HepG2 (cell line): ENCODE measurements at regions of chr2 and their contacts with region 1.

Region 1: GRCh38 chr2:193963472-193964119 is 1693.4 kb upstream of the SLC39A10 start:
- DNase-seq: peak; percentile 36
- ATAC-seq: peak; percentile 89
- H3K4me3 ChIP-seq: no peak overlapping the region
- H3K27ac ChIP-seq: no peak overlapping the region
- H3K4me1 ChIP-seq: no peaks in the 10 kb centered on the region
- H3K27me3 ChIP-seq: no peaks in the 10 kb centered on the region
- CTCF ChIP-seq: peak; percentile 55
- EP300 ChIP-seq: no peak
- POLR2A ChIP-seq: no peak
- RAD21 ChIP-seq: no peak

Region 2: DNA sequence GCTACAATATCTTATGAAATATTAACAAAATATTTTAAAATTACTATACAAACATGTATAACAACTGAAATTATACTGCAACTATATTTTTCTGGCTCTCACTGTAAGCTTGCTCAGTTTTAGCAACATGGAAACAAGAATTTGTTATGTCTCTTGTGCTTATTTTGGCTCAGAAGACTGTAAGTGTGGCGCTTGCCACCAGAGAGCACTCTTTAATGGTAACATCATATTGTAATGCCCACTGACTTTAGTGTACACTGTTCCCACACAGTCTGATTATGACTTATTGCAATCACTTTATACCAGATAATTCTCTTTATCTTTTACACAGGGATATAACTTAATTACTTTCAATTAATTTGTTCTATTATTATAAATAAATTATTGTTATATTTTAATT is 268.2 kb before region 1 on chr2:
- CTCF ChIA-PET with region 1: interaction called, 10 read pairs
- POLR2A ChIA-PET with region 1: no interaction called
- in situ Hi-C with region 1: loop called (anchors 5 kb)
- intact Hi-C with region 1: loop called (anchors 1 kb)
- DNase-seq: peak; percentile 30
- ATAC-seq: peak; percentile 92
- H3K4me3 ChIP-seq: no peak overlapping the region
- H3K27ac ChIP-seq: no peak overlapping the region
- H3K4me1 ChIP-seq: no peaks in the 10 kb centered on the region
- H3K27me3 ChIP-seq: no peaks in the 10 kb centered on the region
- CTCF ChIP-seq: peak; percentile 47
- EP300 ChIP-seq: no peak
- POLR2A ChIP-seq: no peak
- RAD21 ChIP-seq: no peak

Region 3: GRCh38 chr2:193776989-193777388 is 186.6 kb before region 1 on chr2:
- CTCF ChIA-PET with region 1: no interaction called
- POLR2A ChIA-PET with region 1: no interaction called
- in situ Hi-C with region 1: loop called (anchors 10 kb)
- intact Hi-C with region 1: no loop called
- DNase-seq: no peak
- ATAC-seq: no peak
- H3K4me3 ChIP-seq: no peak overlapping the region
- H3K27ac ChIP-seq: no peak overlapping the region
- H3K4me1 ChIP-seq: no peaks in the 10 kb centered on the region
- H3K27me3 ChIP-seq: no peaks in the 10 kb centered on the region
- CTCF ChIP-seq: peak; percentile 34
- EP300 ChIP-seq: no peak
- POLR2A ChIP-seq: no peak
- RAD21 ChIP-seq: no peak

Region 4: DNA sequence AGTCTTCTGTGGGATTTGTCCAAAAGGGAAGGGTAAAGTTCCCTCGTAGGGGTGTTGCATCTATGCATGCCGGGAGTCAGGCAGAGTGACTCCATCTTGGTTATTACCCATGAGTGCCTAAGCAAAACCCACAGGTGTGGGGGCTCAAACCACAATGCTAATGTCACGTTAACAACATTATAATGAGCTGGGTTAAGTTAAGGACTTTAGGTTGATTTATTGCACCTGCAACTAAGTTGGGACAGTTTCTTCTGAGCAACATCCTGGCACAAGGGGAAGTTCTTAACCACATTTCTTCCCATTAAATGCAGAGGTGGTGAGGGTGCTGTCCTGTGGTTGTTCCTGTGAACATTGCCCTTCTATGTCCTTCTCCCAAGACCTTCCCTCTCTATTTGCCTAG is 96.7 kb after region 1 on chr2:
- CTCF ChIA-PET with region 1: no interaction called
- POLR2A ChIA-PET with region 1: no interaction called
- in situ Hi-C with region 1: no loop called
- intact Hi-C with region 1: no loop called
- DNase-seq: no peak
- ATAC-seq: no peak
- H3K4me3 ChIP-seq: no peak overlapping the region
- H3K27ac ChIP-seq: no peak overlapping the region
- H3K4me1 ChIP-seq: no peaks in the 10 kb centered on the region
- H3K27me3 ChIP-seq: no peaks in the 10 kb centered on the region
- CTCF ChIP-seq: no peak
- EP300 ChIP-seq: no peak
- POLR2A ChIP-seq: no peak
- RAD21 ChIP-seq: no peak